ENCODE measurements at regions of chr4 and their contacts with region 1.

Region 1: GRCh38 chr4:105146276-105147015 is at the start of gene TET2:
- ATAC-seq: peak; percentile 86 to 93 (median 92)
- H3K4me3 ChIP-seq: peak within 1 kb of the TSS; percentile 64 to 96 (median 80)
- H3K27ac ChIP-seq: peak within 1 kb of the TSS; percentile 93 to 94
- H3K4me1 ChIP-seq: peaks cover 4 to 9% of the 10 kb centered on the region in 2 donors
- total RNA-seq, gene TET2: 6.5 to 57.0 (median 35.6) TPM

Region 2: DNA sequence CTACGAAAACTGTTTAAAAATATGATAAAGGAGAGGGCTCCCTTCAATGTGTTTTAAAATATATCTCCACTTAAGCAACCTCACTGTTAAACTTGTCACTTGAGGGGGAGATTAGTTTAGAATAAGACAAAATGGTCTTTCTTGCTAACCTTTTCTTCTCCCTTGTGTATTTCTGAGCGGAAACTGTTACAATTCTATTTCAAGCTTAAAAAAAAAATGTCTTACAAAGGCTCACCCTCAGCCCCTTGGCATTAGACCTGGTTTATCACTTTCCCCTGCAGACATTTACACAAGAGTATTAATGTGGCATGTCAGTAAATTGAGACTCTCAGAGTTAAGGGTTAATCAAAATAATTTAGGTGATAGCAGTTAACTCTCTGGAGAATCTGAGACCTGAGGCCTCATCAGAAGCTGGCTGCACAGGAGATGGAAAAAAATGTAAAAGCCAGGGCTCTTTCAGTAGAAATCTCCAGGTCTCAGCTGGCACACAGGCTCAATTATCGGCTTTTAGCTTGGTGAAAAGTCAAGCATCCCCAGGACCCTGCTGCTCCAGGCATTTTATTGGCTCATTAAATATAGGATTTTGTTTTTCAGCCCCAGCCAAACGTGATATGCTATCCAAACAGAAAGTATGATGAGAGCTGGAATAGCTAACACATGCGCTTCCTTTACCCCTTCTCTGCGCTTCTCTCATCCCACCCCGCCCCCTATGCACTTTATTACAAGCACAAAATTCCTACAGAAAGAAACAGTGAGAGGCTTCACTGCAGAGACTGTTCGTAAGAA is 196.9 kb after region 1 on chr4:
- in situ Hi-C with region 1: no loop called
- ATAC-seq: peak in 4 of 8 experiments; percentile 27 to 66 (median 49)
- H3K4me3 ChIP-seq: no peak overlapping the region
- H3K27ac ChIP-seq: no peak overlapping the region
- H3K4me1 ChIP-seq: peaks cover 13 to 19% of the 10 kb centered on the region in 2 donors

Region 3: DNA sequence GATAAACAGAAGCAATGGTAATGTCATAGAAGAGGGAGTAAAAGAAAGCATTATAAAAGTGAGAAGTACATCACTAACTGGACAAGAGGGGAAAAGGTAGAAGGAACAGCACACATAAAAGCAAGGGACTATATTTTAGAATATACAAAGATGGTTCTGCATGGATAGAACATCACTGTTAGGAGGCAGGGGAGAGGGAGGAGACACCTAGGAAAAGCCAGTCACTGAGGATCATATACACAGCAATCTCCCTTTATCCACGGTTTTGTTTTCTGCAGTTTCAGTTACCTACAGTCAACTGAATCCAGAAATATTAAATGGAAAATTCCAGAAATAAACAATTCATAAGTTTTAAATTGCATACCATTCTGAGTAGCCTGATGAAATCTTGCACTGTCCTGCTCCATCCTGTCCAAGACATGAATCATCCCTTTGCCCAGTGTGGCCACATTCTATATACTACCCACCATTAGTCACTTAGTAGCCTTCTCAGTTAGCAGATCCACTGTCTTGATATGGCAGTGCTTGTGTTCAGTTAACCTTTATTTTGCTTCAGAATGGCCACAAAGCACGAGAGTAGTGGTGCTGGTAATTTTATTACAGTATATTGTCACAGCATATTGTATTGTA is 253.2 kb after region 1 on chr4:
- in situ Hi-C with region 1: no loop called
- ATAC-seq: peak in 5 of 8 experiments; percentile 27 to 97 (median 75)
- H3K4me3 ChIP-seq: no peak overlapping the region
- H3K27ac ChIP-seq: no peak overlapping the region
- H3K4me1 ChIP-seq: no peaks in the 10 kb centered on the region

Region 4: GRCh38 chr4:105471566-105472176 is 325.2 kb after region 1 on chr4:
- in situ Hi-C with region 1: loop called in 4 of 9 experiments (anchors 10 to 25 kb)
- ATAC-seq: peak in 7 of 8 experiments; percentile 4 to 31 (median 12)
- H3K4me3 ChIP-seq: peak overlapping the region; percentile 55 to 87 (median 77)
- H3K27ac ChIP-seq: no peak overlapping the region
- H3K4me1 ChIP-seq: peaks cover 0 to 5% of the 10 kb centered on the region in 2 donors

Measured in motor neuron (in vitro differentiated cells).